Mammary epithelial cell (primary cell): ENCODE measurements at regions of chr3 and their contacts with region 1.

Region 1: GRCh38 chr3:134685929-134686802 is 35.3 kb upstream of the KY start:
- DNase-seq: no peak
- H3K4me3 ChIP-seq: no peak overlapping the region
- H3K27ac ChIP-seq: no peak overlapping the region
- H3K4me1 ChIP-seq: no peaks in the 10 kb centered on the region
- H3K27me3 ChIP-seq: no peaks in the 10 kb centered on the region
- CTCF ChIP-seq: no peak

Region 2: DNA sequence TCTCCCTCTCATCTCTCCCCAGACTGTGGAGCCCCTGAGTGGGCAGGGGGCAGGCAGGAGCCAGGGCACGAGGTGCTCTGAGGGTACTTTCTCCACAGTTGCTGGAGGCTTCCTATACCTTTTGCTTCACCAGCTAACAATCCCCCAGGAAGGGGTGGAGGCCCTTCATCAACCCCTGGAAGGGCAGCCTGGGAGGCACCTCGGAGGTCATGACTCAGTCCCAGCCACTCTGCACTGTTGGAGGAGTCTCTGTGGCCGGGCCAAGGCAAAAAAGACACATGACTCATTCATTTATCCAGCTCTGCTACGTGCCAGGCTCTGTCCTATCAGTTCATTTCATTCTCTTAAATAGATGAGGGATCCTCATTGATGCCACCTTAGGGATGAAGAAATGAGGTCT is 19.7 kb before region 1 on chr3:
- CTCF ChIA-PET with region 1: no interaction called
- dilution Hi-C with region 1: no loop called
- in situ Hi-C with region 1: no loop called
- intact Hi-C with region 1: loop called (anchors 2 kb)
- DNase-seq: peak; percentile 55
- H3K4me3 ChIP-seq: no peak overlapping the region
- H3K27ac ChIP-seq: no peak overlapping the region
- H3K4me1 ChIP-seq: peaks cover 9% of the 10 kb centered on the region
- H3K27me3 ChIP-seq: no peaks in the 10 kb centered on the region
- CTCF ChIP-seq: no peak

Region 3: GRCh38 chr3:135084405-135084804 is 398.2 kb after region 1 on chr3:
- CTCF ChIA-PET with region 1: no interaction called
- dilution Hi-C with region 1: no loop called
- in situ Hi-C with region 1: no loop called
- intact Hi-C with region 1: no loop called
- DNase-seq: no peak
- H3K4me3 ChIP-seq: no peak overlapping the region
- H3K27ac ChIP-seq: no peak overlapping the region
- H3K4me1 ChIP-seq: no peaks in the 10 kb centered on the region
- H3K27me3 ChIP-seq: no peaks in the 10 kb centered on the region
- CTCF ChIP-seq: no peak

Region 4: DNA sequence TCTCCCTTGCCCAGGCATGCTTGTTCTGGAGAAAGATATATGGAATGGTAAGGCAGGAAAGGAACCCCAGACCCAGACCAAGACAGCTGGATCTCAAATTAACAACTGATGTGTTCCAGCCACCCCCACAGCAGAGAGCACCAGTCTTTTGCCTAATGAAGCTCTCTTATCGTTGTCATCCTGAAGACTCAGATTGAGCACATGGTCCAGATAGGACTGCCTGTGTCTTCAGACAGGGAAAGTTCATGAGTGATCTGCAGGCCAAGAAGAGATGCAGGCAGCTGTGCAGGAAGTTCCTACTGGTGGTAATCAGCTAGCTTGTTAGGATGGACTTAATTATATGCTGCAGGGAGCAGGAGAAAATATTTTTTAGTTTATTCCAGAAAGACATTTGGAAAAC is 1332.7 kb after region 1 on chr3:
- CTCF ChIA-PET with region 1: no interaction called
- dilution Hi-C with region 1: no loop called
- in situ Hi-C with region 1: no loop called
- intact Hi-C with region 1: loop called (anchors 10 kb)
- DNase-seq: no peak
- H3K4me3 ChIP-seq: no peak overlapping the region
- H3K27ac ChIP-seq: no peak overlapping the region
- H3K4me1 ChIP-seq: peaks cover 28% of the 10 kb centered on the region
- H3K27me3 ChIP-seq: no peaks in the 10 kb centered on the region
- CTCF ChIP-seq: no peak